ENCODE measurements at regions of chr10 and their contacts with region 1.

Region 1: GRCh38 chr10:122565728-122566206 is 5.2 kb downstream of the DMBT1 start:
- DNase-seq: peak; percentile 72
- H3K4me3 ChIP-seq: peak overlapping the region; percentile 35
- H3K27ac ChIP-seq: no peak overlapping the region
- H3K27me3 ChIP-seq: peaks cover 16% of the 10 kb centered on the region
- CTCF ChIP-seq: peak; percentile 91

Region 2: GRCh38 chr10:122279725-122280141 is 286.0 kb before region 1 on chr10:
- CTCF ChIA-PET with region 1: interaction called, 12 read pairs
- POLR2A ChIA-PET with region 1: no interaction called
- DNase-seq: no peak
- H3K4me3 ChIP-seq: no peak overlapping the region
- H3K27ac ChIP-seq: no peak overlapping the region
- H3K27me3 ChIP-seq: no peaks in the 10 kb centered on the region
- CTCF ChIP-seq: peak; percentile 63

Region 3: GRCh38 chr10:122307669-122308486 is 257.9 kb before region 1 on chr10:
- CTCF ChIA-PET with region 1: interaction called, 31 read pairs
- POLR2A ChIA-PET with region 1: no interaction called
- DNase-seq: peak; percentile 76
- H3K4me3 ChIP-seq: peak overlapping the region; percentile 32
- H3K27ac ChIP-seq: peak overlapping the region; percentile 83
- H3K27me3 ChIP-seq: no peaks in the 10 kb centered on the region
- CTCF ChIP-seq: no peak

Region 4: DNA sequence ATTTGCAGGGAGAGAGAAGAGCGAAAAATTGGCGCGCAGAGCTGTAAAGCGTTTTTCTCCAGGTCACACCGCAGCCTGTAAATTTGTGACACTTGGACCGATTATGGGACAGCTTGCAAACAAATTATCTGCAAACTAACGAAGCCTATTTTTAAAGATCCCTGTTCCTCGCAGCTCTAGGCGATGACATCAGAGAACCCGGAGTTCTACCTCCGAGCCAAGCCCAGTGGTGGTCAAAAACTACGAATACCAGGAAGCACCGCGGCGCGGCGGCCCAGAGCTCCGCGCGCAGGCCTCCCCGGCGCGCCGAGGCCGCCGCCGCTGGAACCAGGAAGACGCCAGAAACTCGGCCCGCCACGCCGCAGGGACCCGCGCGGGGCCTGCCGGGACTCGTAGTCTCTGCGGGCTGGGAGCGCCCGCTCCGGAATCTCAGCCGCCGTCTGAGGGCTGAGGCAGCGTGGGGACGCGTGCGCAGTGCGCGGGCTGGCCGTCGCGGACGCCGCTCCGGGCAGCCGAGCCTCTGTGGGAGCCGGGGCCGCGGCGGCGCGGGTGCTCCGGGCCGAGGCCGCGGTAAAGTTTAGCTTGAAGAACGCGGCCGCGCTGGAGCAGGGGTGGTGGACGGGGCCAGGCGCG is 191.4 kb before region 1 on chr10 and contains the start of gene PLEKHA1:
- CTCF ChIA-PET with region 1: interaction called, 11 read pairs
- POLR2A ChIA-PET with region 1: no interaction called
- DNase-seq: peak; percentile 80
- H3K4me3 ChIP-seq: peak within 1 kb of the TSS; percentile 86
- H3K27ac ChIP-seq: no peak within 1 kb of the TSS
- H3K27me3 ChIP-seq: peaks cover 7% of the 10 kb centered on the region
- CTCF ChIP-seq: no peak
- polyA plus RNA-seq, gene PLEKHA1: 17.6 and 25.5 TPM in 2 replicates

Region 5: DNA sequence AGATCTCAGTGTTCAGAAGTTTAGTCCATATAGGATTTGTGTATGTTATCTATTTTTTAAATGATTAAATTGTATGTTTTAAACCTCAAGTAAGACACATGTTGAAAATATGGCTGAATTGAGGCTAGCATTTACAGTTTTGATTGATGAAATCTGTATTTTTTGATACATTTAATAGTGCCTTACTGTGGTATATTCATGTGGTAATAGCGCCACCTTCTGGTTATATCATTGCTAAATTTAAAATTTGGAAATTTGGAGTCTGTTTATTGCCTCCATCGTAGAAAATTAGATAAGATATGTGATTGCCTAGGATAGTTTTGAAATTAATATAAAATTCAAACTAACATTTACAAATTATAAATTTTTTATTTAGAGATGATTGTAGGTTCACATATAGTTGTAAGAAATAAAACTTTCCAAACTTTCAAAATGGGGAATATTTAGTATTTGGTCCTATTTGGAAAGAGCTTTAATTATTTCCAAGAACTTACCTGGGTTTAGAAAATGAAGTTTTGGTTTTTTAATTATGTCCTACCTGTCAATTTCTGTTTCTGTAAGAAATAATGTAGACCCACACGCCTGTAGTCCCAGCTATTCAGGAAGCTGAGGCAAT is 130.4 kb before region 1 on chr10:
- CTCF ChIA-PET with region 1: interaction called, 86 read pairs
- POLR2A ChIA-PET with region 1: no interaction called
- DNase-seq: no peak
- H3K4me3 ChIP-seq: no peak overlapping the region
- H3K27ac ChIP-seq: no peak overlapping the region
- H3K27me3 ChIP-seq: no peaks in the 10 kb centered on the region
- CTCF ChIP-seq: peak; percentile 57

Region 6: GRCh38 chr10:122468926-122469781 is 96.6 kb before region 1 on chr10:
- CTCF ChIA-PET with region 1: interaction called, 13 read pairs
- POLR2A ChIA-PET with region 1: no interaction called
- DNase-seq: peak; percentile 83
- H3K4me3 ChIP-seq: no peak overlapping the region
- H3K27ac ChIP-seq: peak overlapping the region; percentile 60
- H3K27me3 ChIP-seq: no peaks in the 10 kb centered on the region
- CTCF ChIP-seq: no peak

Region 7: DNA sequence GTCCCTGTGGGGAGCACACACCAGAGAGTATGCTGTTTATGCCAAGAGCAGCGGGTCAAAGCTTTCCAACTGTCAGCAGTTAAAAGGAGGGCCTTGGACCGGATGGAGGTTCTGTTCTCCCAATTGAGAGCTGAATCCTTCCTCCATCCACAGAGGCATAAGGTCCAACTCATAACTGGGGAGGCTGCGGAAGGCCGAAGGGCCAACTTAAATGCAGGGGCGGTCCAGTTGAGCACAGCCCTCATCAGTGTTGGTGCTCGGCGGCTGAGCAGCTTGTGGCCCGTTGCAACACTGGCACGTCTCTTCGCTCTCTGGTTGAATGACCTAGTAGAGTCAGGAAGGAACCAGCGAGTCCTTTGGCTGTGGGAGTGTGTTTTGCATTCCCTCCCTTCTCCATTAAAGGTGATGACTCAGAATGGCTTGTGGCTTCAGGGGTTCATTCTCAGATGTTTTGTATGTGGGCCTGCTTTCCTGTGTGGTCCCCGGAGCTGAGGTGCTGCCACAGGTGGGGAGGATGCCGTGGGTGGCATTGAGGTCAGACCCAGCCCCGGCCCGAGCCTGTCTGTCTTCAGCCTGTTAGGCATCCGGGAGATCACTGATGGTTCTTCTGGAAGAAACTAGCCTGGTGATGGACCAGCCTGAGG is 50.1 kb before region 1 on chr10:
- CTCF ChIA-PET with region 1: interaction called, 12 read pairs
- POLR2A ChIA-PET with region 1: no interaction called
- DNase-seq: no peak
- H3K4me3 ChIP-seq: no peak overlapping the region
- H3K27ac ChIP-seq: no peak overlapping the region
- H3K27me3 ChIP-seq: no peaks in the 10 kb centered on the region
- CTCF ChIP-seq: no peak